PC-9 (cell line): ENCODE measurements at regions of chr22 and their contacts with region 1.

Region 1: DNA sequence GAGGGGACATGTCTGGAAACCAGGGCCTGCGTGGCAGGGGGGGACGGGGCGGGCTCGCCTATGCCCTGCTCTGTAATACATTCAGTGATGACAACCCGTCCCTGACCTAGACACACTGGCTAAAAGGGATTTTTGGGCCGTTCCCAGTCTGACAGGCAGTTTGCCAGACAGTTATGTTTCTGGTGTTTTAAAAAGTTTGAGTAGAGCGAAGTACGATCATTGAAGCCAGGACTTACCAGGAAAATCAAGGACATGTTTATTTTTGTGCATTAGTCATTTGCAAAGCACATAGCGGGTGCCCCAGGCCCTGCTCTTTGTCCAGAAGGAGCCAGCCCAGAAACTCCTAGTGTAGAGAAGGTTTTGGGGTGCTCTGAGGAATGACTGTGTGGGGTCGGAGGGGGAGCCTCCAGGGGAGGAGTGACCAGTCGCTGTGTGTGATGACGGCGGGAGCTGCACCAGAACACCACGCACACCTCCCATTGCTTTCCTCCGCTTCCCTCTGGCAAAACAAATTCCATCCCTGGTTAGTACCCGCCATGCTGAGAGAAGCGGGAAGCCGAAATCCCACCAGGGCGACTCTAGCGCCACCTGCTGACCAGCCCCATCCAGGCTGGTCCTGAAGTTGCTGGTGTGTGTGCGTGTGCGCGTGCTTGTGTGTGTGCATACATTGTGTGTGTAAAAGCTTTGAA is 50.8 kb downstream of the FBLN1 start:
- DNase-seq: peak; percentile 35 to 67
- H3K4me3 ChIP-seq: no peak overlapping the region
- H3K27ac ChIP-seq: no peak overlapping the region
- H3K4me1 ChIP-seq: peaks cover 35% of the 10 kb centered on the region
- H3K27me3 ChIP-seq: no peaks in the 10 kb centered on the region
- CTCF ChIP-seq: peak; percentile 76

Region 2: DNA sequence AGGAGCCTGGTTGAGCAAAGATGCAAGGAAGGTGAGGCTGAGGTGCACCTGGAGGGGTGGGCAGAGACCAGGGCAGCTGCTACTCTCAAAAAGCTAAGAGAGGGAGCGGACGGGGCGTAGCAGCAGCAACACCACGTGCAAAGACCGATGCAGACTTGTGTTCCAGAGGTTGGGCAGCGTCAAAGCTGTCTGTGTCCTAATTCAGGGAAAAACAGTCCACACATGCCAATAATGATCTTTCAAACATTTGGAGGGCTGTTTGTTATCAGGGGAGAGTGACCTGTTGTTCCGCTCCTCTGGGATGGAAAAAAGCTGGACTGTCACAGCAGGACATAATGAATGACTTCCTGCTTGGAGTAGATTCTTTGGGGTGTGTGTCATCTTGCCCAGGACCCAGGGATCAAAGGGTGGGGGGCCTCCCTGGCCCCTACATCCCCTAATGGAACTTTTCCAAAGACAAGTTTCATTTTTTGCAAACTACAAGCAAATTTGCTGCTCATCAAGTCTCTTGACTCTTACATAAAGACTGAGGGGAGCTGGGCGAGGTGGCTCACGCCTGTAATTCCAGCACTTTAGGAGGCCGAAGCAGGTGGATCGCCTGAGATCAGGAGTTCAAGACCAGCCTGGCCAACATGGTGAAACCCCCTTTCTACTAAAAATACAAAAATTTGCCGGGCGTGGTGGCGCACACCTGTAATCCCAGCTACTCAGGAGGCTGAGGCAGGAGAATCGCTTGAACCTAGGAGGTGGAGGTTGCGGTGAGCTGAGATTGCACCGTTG is 56.9 kb before region 1 on chr22:
- CTCF ChIA-PET with region 1: no interaction called
- POLR2A ChIA-PET with region 1: no interaction called
- intact Hi-C with region 1: no loop called
- DNase-seq: peak in 1 of 2 experiments; percentile 54
- H3K4me3 ChIP-seq: no peak overlapping the region
- H3K27ac ChIP-seq: 0 out of 2 replicates have a peak overlapping the region, but pooled peaks have one; percentile 13
- H3K4me1 ChIP-seq: peaks cover 52% of the 10 kb centered on the region
- H3K27me3 ChIP-seq: no peaks in the 10 kb centered on the region
- CTCF ChIP-seq: no peak

Region 3: DNA sequence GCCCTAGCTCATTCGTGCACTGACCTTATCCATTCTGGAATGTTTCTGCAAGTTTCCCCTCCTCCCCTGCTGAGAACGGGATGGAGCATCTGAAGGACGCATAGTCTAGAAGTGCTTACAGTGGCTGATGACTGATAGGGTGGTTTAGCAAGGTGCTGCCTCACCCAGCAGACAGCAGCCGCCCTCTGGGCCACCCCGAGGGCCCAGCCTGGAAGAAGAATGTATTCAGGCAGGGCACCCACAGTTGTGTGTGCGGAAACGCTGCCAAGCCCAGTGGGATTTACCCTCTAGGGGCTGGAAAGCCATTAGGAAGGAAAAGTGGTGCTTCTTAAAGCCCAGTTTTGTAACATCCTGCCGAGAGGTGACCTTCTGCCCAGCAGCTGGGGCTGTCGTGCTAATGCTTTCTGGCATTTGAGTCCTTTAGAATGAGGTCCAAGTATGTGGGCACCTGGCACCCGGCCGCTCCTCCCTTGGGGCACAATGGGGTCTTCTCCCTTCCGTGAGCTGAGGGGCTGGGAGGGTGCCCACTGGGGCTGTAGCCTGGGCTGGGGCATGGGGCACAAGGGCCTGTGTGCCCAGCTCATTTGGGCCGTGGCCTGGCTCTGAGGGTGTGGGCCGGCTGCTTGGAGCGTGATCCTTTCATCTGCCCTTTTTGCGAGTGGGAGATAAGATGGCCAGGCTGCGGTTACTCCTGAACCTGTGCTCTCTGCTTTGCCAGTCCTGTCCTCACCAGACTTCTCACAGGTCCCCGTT is 36.4 kb before region 1 on chr22:
- CTCF ChIA-PET with region 1: interaction called, 3 read pairs
- POLR2A ChIA-PET with region 1: interaction called, 3 read pairs
- intact Hi-C with region 1: loop called (anchors 1 kb)
- DNase-seq: peak; percentile 93 to 97
- H3K4me3 ChIP-seq: no peak overlapping the region
- H3K27ac ChIP-seq: peak overlapping the region; percentile 77
- H3K4me1 ChIP-seq: peaks cover 74% of the 10 kb centered on the region
- H3K27me3 ChIP-seq: no peaks in the 10 kb centered on the region
- CTCF ChIP-seq: no peak